ENCODE measurements at regions of chr10 and their contacts with region 1.

Region 1: GRCh38 chr10:31031558-31032257 is at the start of gene ZNF438:
- DNase-seq: peak; percentile 98
- ATAC-seq: peak; percentile 84
- H3K4me3 Mint-ChIP-seq: peak within 1 kb of the TSS; percentile 89
- H3K27ac Mint-ChIP-seq: peak within 1 kb of the TSS; percentile 97
- H3K4me1 Mint-ChIP-seq: peaks cover 14% of the 10 kb centered on the region
- H3K27me3 Mint-ChIP-seq: no peaks in the 10 kb centered on the region
- CTCF ChIP-seq: no peak
- total RNA-seq, gene ZNF438: 2.9 and 3.9 TPM in 2 replicates

Region 2: DNA sequence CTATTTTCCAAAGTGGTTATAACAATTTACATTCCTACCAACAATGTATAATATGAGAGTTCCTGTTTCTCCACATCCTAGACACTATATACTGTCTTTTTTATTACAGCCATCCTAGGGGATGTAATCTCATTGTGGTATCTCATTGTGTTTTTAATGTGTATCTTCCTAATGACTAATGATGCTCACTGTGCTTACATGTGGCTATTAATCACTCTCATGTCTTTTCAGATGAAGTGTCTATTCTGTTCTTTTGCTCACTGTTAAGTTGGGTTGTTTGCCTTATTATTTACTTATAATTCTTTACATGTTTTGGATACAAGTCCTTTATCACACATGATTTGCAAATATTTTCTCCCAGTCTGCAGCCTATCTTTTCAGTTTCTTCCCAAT is 71.9 kb before region 1 on chr10:
- CTCF ChIA-PET with region 1: no interaction called
- POLR2A ChIA-PET with region 1: interaction called, 12 read pairs
- intact Hi-C with region 1: loop called (anchors 1 kb)
- DNase-seq: no peak
- ATAC-seq: peak; percentile 14
- H3K4me3 Mint-ChIP-seq: peak overlapping the region; percentile 50
- H3K27ac Mint-ChIP-seq: no peak overlapping the region
- H3K4me1 Mint-ChIP-seq: peaks cover 27% of the 10 kb centered on the region
- H3K27me3 Mint-ChIP-seq: no peaks in the 10 kb centered on the region
- CTCF ChIP-seq: no peak

Region 3: GRCh38 chr10:31133628-31134302 is 102.1 kb after region 1 on chr10:
- CTCF ChIA-PET with region 1: interaction called, 3 read pairs
- POLR2A ChIA-PET with region 1: interaction called, 16 read pairs
- intact Hi-C with region 1: loop called (anchors 1 kb)
- DNase-seq: peak; percentile 53
- ATAC-seq: peak; percentile 84
- H3K4me3 Mint-ChIP-seq: peak overlapping the region; percentile 80
- H3K27ac Mint-ChIP-seq: peak overlapping the region; percentile 59
- H3K4me1 Mint-ChIP-seq: peaks cover 20% of the 10 kb centered on the region
- H3K27me3 Mint-ChIP-seq: no peaks in the 10 kb centered on the region
- CTCF ChIP-seq: no peak

Region 4: GRCh38 chr10:31603235-31604087 is 571.8 kb after region 1 on chr10:
- CTCF ChIA-PET with region 1: no interaction called
- POLR2A ChIA-PET with region 1: interaction called, 6 read pairs
- intact Hi-C with region 1: loop called (anchors 1 kb)
- DNase-seq: peak; percentile 64
- ATAC-seq: peak; percentile 97
- H3K4me3 Mint-ChIP-seq: peak overlapping the region; percentile 83
- H3K27ac Mint-ChIP-seq: no peak overlapping the region
- H3K4me1 Mint-ChIP-seq: peaks cover 12% of the 10 kb centered on the region
- H3K27me3 Mint-ChIP-seq: peaks cover 6% of the 10 kb centered on the region
- CTCF ChIP-seq: no peak

Region 5: DNA sequence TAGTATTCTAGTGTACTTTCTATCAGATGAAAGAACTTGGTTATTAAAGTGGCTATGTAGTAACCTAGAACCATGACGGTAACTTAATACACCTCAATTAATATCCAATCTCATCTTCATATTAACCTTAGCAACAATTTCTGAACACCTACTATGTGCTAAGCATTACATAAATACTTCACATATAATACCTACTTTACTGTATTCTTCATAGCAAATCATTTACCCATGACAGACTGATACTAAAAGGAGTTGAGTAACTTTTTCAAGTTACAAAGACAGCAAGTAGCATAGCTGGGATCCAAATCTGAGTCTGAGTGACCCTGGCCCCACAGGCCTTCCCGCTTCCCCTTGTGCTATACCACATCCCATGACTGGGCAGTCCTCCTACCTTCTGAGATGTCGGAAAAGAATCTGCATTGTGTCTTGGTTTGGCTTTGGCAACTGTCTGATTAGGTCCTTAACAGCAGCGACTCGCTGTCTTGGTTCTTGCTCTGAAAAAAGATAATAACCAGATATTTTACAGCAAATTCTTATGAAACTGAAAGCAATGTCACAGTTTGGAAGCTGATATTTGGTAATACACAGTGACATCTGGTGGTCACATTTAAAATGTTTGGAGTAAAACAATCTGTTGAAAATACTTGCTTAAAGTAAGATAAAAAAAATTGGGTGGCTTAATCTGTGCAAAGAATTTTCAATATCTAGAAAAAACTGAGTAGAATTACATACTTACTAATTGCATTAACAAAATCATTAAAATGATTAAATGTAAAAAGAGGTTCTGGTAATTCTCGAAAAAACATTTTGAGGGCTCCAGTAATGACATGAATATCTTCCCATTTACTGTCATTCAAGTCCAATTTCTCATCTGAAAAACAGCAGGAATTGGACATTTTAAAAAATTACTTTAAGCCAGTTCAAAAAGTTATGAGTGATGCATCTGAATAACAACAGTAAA is 776.8 kb after region 1 on chr10:
- CTCF ChIA-PET with region 1: interaction called, 5 read pairs
- POLR2A ChIA-PET with region 1: interaction called, 3 read pairs
- intact Hi-C with region 1: loop called (anchors 1 kb)
- DNase-seq: no peak
- ATAC-seq: no peak
- H3K4me3 Mint-ChIP-seq: no peak overlapping the region
- H3K27ac Mint-ChIP-seq: peak overlapping the region; percentile 6
- H3K4me1 Mint-ChIP-seq: peaks cover 7% of the 10 kb centered on the region
- H3K27me3 Mint-ChIP-seq: no peaks in the 10 kb centered on the region
- CTCF ChIP-seq: no peak

Region 6: GRCh38 chr10:32378363-32379317 is 1346.9 kb after region 1 on chr10:
- CTCF ChIA-PET with region 1: no interaction called
- POLR2A ChIA-PET with region 1: interaction called, 4 read pairs
- intact Hi-C with region 1: loop called (anchors 2 kb)
- DNase-seq: peak; percentile 73
- ATAC-seq: peak; percentile 94
- H3K4me3 Mint-ChIP-seq: no peak overlapping the region
- H3K27ac Mint-ChIP-seq: no peak overlapping the region
- H3K4me1 Mint-ChIP-seq: peaks cover 21% of the 10 kb centered on the region
- H3K27me3 Mint-ChIP-seq: no peaks in the 10 kb centered on the region
- CTCF ChIP-seq: no peak

Measured in activated B cell treated with CpG ODN at 0.5 μM for 24 hours (primary cell).